Left ventricle myocardium superior (tissue), 1 donor: ENCODE measurements at regions of chr4 and their contacts with region 1.

Region 1: DNA sequence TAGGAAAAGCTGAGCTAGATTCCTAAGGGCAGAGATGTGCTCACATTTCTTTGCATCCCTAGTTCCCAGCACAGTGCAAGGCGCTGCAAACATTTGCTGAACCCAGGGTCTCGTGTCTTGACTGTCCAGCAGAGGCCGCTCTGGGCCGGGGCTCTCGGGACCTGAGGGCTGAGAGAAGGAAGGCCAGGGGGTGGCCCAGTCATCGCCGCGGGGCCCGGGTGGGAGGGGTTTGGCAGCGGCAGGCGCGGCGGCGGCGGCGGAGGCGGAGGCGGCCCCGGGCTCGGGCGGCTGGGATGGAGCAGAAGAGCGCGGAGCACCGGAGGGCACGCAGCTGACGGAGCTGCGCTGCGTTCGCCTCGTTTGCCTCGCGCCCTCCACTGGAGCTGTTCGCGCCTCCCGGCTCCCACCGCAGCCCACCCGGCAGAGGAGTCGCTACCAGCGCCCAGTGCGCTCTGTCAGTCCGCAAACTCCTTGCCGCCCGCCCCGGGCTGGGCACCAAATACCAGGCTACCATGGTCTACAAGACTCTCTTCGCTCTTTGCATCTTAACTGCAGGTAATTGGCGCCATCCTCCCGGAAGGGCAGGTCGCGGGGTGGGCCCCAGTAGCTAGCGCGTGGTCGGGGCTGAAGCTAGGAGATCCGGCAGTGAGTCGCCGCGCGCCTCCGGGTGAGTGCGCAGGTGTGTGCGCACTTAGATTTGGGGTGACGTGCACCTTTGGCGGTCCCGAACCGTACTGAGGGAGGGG is at the start of gene PARM1:
- DNase-seq: peak; percentile 95
- ATAC-seq: peak; percentile 98
- total RNA-seq, gene PARM1: 107 TPM

Region 2: GRCh38 chr4:75118739-75119138 is 185.8 kb after region 1 on chr4:
- intact Hi-C with region 1: loop called (anchors 5 kb)
- DNase-seq: no peak
- ATAC-seq: no peak

Region 3: GRCh38 chr4:76279472-76279871 is 1346.5 kb after region 1 on chr4:
- intact Hi-C with region 1: no loop called
- DNase-seq: no peak
- ATAC-seq: no peak